Mammary epithelial cell (primary cell): ENCODE measurements at regions of chr17 and their contacts with region 1.

Region 1: GRCh38 chr17:78313735-78314648 is 45.9 kb downstream of the SOCS3 start:
- DNase-seq: peak; percentile 93
- H3K4me3 ChIP-seq: peak overlapping the region in 2 of 3 experiments; percentile 33 to 46
- H3K27ac ChIP-seq: peak overlapping the region; percentile 79
- H3K4me1 ChIP-seq: peaks cover 46% of the 10 kb centered on the region
- H3K27me3 ChIP-seq: no peaks in the 10 kb centered on the region
- CTCF ChIP-seq: no peak

Region 2: DNA sequence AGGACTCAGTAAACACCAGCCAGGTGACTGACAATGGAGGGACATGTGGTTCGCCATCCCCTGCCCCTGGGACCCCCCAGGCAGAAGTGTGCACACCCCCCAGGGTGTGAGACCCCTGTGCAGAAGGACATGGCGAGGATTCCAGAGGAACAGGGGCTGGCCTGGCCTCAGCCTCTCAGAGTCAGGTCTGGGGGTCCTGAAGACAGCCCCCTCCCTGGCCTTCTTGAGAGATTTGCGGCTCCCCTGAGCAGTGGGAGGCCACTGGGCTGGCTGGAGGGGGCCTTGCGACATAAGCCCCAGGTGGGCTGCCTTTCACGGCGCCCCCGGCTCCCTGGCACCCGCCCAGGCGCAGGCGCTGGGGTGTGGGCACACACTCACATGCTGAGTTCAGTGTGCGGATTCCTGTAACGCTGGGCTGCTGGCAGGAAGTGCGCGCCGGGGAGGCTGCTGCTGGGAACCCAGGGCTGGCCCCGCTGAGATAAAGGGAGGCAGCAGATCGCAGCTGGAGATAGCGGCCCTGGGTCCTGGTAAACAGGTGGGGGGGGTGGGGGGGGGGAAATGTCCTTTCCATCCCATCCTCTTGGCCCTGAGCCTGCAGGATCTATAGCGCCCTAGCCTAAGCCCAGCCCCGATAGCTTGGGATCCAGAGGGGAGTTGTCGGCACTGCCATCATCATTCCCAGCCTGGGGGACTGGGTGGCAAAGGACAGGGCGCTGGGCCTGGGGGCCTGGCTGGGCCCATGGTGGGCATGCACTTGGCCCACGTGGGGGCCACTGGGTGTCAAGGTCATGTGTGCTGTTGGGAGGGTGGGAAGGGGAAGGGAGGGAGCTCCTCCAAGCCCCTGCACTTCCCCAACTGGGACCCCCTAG is 55.4 kb before region 1 on chr17:
- CTCF ChIA-PET with region 1: no interaction called
- dilution Hi-C with region 1: loop called (anchors 5 kb)
- in situ Hi-C with region 1: no loop called
- intact Hi-C with region 1: no loop called
- DNase-seq: no peak
- H3K4me3 ChIP-seq: no peak overlapping the region
- H3K27ac ChIP-seq: no peak overlapping the region
- H3K4me1 ChIP-seq: no peaks in the 10 kb centered on the region
- H3K27me3 ChIP-seq: no peaks in the 10 kb centered on the region
- CTCF ChIP-seq: no peak

Region 3: GRCh38 chr17:78289802-78290363 is 24.1 kb before region 1 on chr17:
- CTCF ChIA-PET with region 1: no interaction called
- dilution Hi-C with region 1: no loop called
- in situ Hi-C with region 1: no loop called
- intact Hi-C with region 1: loop called (anchors 2 kb)
- DNase-seq: peak; percentile 80
- H3K4me3 ChIP-seq: no peak overlapping the region
- H3K27ac ChIP-seq: no peak overlapping the region
- H3K4me1 ChIP-seq: peaks cover 9% of the 10 kb centered on the region
- H3K27me3 ChIP-seq: no peaks in the 10 kb centered on the region
- CTCF ChIP-seq: peak; percentile 90 to 91

Region 4: DNA sequence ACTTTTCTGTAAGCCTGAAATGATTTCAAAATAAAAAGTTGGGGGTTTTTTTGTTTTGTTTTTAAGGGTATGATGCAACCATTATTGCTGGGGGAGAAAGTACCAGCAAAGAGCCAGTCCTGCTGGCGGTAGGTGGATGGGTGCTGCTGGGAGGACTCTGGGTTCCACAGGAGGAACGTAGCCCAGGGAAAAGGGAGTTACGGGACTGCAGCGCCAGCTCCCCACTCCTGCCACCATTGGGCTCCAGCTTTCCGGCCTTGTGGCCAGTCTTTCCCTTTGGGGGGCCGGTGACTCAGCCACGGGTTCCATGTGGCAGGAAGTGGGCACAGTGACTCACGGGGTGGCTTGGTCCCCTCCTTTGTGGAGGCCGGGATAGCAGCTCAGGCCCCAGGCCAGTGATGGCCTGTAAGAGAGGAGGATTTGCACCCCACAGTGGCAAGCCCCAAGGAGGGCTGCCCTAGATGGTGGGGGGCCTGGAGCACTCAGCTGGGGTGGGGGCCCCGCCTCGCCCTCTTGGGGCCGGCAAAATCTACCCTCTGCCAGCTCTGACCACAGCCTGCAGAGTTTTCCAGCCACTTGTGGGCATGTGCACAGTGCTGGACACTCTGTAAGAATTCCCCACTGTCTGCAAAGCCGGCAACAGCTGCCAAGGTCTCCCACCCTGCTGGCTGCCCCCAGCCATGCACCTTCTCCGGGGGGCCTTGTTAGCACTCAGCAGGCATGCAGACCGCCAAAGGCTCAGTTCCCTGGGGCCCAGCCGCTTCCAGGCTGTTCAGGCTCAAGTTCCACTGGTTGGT is 15.5 kb after region 1 on chr17:
- CTCF ChIA-PET with region 1: interaction called, 12 read pairs
- dilution Hi-C with region 1: no loop called
- in situ Hi-C with region 1: no loop called
- intact Hi-C with region 1: loop called (anchors 2 kb)
- DNase-seq: peak; percentile 80
- H3K4me3 ChIP-seq: no peak overlapping the region
- H3K27ac ChIP-seq: peak overlapping the region; percentile 57
- H3K4me1 ChIP-seq: peaks cover 33% of the 10 kb centered on the region
- H3K27me3 ChIP-seq: no peaks in the 10 kb centered on the region
- CTCF ChIP-seq: no peak

Region 5: DNA sequence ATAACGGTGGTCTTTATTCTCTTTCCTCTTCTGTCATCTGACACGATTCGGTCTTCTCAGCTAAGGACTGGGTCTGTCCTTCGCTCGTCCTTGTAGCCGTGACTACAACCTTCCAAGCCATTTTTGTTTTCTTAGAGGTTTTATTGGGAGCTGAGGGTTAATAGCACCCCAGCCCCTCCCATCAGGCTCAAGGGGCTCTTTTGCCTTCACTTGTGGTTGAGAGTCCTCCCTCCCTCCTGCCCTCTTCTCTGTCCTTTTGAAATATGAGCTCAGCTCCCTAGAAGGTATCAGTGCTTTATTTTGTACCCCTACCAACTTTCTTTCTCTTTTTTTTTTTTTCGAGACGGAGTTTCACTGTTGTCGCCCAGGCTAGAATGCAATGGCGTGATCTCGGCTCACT is 21.2 kb after region 1 on chr17:
- CTCF ChIA-PET with region 1: no interaction called
- dilution Hi-C with region 1: no loop called
- in situ Hi-C with region 1: no loop called
- intact Hi-C with region 1: loop called (anchors 2 kb)
- DNase-seq: no peak
- H3K4me3 ChIP-seq: no peak overlapping the region
- H3K27ac ChIP-seq: peak overlapping the region; percentile 81
- H3K4me1 ChIP-seq: peaks cover 12% of the 10 kb centered on the region
- H3K27me3 ChIP-seq: no peaks in the 10 kb centered on the region
- CTCF ChIP-seq: no peak

Region 6: DNA sequence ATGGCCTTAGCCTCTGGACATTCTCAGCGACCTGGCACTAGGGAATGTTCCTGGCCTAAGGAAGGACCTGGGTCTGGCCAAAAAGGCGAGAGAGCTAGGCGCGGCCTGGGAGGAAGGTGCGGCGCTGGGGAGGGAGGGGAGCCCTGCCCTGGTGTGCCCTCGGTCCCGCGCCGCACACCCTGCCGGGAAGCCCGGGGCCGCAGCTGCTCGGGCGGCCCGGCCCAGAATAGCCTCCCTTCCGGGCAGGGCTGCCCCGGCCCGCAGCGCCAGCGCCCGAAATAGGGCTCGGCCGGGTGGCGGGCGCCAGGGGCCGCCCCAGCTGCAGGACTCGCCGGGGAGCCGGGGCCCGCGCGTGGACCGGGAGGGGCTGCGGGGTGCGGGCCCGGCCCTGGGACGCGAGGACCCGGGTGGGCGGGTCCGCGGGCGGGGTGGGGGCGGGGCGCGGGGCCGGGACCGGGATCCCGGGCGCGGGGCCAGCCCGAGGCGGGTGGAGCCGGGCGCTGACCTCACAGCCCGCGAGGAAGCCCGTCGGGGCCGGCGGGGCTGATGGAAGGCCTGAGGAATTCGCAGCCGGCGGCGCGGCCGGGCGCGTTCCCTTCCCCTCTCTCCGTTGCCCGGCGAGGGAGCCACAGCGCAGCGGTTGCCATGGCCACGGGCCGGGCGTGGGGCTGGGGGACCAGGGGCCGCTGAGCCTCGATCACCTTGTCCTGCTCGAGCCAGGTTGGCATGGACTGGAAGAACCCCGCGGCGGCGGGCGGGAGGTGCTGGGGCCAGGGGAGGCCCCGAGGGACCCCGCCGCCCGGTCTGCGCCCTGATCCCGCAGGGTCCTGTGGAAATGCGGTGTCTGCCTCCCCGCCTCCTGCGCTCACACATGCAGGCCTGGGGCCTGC is 27.8 kb after region 1 on chr17:
- CTCF ChIA-PET with region 1: no interaction called
- dilution Hi-C with region 1: no loop called
- in situ Hi-C with region 1: no loop called
- intact Hi-C with region 1: loop called (anchors 2 kb)
- DNase-seq: peak; percentile 65
- H3K4me3 ChIP-seq: peak overlapping the region in 2 of 3 experiments; percentile 17 to 31
- H3K27ac ChIP-seq: peak overlapping the region; percentile 82
- H3K4me1 ChIP-seq: peaks cover 37% of the 10 kb centered on the region
- H3K27me3 ChIP-seq: no peaks in the 10 kb centered on the region
- CTCF ChIP-seq: no peak